ENCODE measurements at regions of chr3 and their contacts with region 1.

Region 1: GRCh38 chr3:18758047-18758704 is 333.0 kb upstream of the SATB1 start:
- DNase-seq: peak; percentile 73
- H3K4me3 Mint-ChIP-seq: no peak overlapping the region
- H3K27ac Mint-ChIP-seq: peak overlapping the region; percentile 26
- H3K4me1 Mint-ChIP-seq: peaks cover 50% of the 10 kb centered on the region
- H3K27me3 Mint-ChIP-seq: no peaks in the 10 kb centered on the region

Region 2: GRCh38 chr3:18080198-18080689 is 677.9 kb before region 1 on chr3:
- CTCF ChIA-PET with region 1: no interaction called
- POLR2A ChIA-PET with region 1: no interaction called
- DNase-seq: no peak
- H3K4me3 Mint-ChIP-seq: no peak overlapping the region
- H3K27ac Mint-ChIP-seq: no peak overlapping the region
- H3K4me1 Mint-ChIP-seq: no peaks in the 10 kb centered on the region
- H3K27me3 Mint-ChIP-seq: peaks cover 3% of the 10 kb centered on the region

Region 3: DNA sequence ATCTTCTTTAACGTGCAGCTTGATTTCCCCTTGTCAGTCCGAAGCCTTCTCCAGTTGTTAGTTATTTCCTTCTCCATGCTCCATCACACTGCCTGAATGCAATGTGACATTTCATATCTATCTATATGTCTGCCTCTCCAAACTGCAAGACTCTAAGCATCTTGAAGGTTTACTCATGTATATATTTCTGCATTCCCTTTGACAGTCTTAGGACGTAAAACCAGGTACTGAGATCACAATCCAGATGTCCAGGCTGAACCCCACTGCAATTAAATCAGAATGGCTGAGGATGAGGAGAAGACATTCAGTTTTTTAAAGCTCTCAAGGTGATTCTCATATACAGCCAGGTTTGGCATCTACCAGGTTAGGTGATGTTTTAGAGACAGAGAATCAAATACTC is 326.9 kb before region 1 on chr3:
- CTCF ChIA-PET with region 1: interaction called, 12 read pairs
- POLR2A ChIA-PET with region 1: no interaction called
- DNase-seq: no peak
- H3K4me3 Mint-ChIP-seq: peak overlapping the region; percentile 76
- H3K27ac Mint-ChIP-seq: peak overlapping the region; percentile 83
- H3K4me1 Mint-ChIP-seq: peaks cover 72% of the 10 kb centered on the region
- H3K27me3 Mint-ChIP-seq: no peaks in the 10 kb centered on the region

Region 4: DNA sequence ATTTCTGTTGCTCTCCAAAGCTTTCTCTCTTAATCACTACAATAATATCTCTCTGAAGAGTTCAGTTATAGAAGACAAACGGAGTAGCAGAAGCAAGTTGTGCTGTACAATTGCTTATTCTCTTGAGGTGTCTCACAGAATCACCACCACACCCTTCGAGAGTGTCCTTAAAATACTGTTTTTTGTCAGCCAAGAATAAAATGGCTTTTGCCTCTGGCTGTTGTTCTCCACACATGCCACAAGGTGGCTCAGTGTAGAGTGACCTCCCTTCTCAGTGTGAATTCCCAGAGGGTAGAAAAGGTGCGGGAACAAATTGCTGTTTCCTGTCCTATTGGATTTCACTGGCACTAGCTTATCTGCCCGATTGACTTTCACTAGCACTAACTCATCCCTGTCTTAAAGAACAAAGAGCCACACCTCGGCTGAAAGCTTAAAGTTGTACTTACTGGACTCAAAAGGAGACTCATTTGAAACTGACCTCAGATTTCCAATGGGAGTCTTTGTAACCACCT is 198.8 kb before region 1 on chr3:
- CTCF ChIA-PET with region 1: interaction called, 16 read pairs
- POLR2A ChIA-PET with region 1: no interaction called
- DNase-seq: peak; percentile 47
- H3K4me3 Mint-ChIP-seq: no peak overlapping the region
- H3K27ac Mint-ChIP-seq: peak overlapping the region; percentile 83
- H3K4me1 Mint-ChIP-seq: peaks cover 49% of the 10 kb centered on the region
- H3K27me3 Mint-ChIP-seq: no peaks in the 10 kb centered on the region

Region 5: DNA sequence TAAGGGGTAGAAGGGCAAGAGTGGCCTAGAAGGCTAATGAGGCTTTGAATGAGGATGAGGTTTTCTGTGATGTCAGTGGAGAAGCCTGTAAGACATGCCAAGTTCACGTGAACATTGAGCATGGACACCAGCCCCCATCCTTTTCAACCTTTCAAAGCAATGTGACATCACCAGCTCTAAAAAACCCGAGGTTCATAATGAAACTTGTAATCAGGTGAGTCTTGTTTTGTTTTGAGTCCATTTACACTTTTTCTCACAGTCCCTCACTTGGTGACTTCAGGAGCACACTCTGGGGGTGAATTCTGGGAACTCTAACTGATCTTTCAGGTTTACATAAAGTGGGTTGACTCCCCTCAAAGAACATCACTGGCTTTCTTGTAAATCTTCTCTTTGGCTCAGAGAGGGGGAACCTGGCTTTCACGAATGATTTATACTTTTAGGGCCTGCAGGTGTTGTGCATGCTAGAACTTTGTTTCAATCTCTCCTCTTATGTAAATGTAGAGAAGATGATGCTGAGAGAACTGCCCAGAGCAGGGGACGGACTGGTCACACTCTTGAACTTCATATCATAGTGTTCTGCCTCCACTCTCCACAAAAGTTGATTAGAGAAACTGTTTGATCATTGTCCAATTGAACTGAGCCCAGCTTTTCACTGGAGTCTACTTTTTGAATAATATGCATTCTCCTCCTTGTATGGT is 108.4 kb before region 1 on chr3:
- CTCF ChIA-PET with region 1: interaction called, 8 read pairs
- POLR2A ChIA-PET with region 1: interaction called, 10 read pairs
- DNase-seq: peak; percentile 70
- H3K4me3 Mint-ChIP-seq: peak overlapping the region; percentile 9
- H3K27ac Mint-ChIP-seq: peak overlapping the region; percentile 88
- H3K4me1 Mint-ChIP-seq: peaks cover 76% of the 10 kb centered on the region
- H3K27me3 Mint-ChIP-seq: no peaks in the 10 kb centered on the region

Region 6: GRCh38 chr3:18703798-18704197 is 54.4 kb before region 1 on chr3:
- CTCF ChIA-PET with region 1: interaction called, 10 read pairs
- POLR2A ChIA-PET with region 1: no interaction called
- DNase-seq: no peak
- H3K4me3 Mint-ChIP-seq: no peak overlapping the region
- H3K27ac Mint-ChIP-seq: no peak overlapping the region
- H3K4me1 Mint-ChIP-seq: peaks cover 13% of the 10 kb centered on the region
- H3K27me3 Mint-ChIP-seq: no peaks in the 10 kb centered on the region

Region 7: DNA sequence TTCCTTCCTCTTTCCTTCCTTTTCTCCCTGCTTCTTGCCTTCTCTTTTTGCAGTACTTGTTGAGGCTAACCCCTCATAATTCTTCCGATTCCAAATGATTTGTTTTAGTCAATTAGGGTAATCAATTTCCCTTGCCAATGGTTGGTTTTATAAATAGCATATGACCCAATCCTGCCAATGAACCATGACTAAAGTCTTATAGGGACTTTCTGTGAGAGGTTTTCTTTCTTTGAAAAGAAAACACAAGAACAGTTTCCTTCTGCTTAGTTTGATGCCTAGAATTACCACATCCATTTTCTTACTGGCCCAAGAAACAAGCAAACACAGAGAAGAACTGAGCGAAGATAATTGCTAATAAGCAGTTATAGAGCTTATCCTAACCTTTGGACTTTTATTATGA is 40.6 kb before region 1 on chr3:
- CTCF ChIA-PET with region 1: interaction called, 29 read pairs
- POLR2A ChIA-PET with region 1: no interaction called
- DNase-seq: no peak
- H3K4me3 Mint-ChIP-seq: peak overlapping the region; percentile 13
- H3K27ac Mint-ChIP-seq: peak overlapping the region; percentile 96
- H3K4me1 Mint-ChIP-seq: peaks cover 70% of the 10 kb centered on the region
- H3K27me3 Mint-ChIP-seq: no peaks in the 10 kb centered on the region

Region 8: GRCh38 chr3:18747383-18747782 is 10.8 kb before region 1 on chr3:
- CTCF ChIA-PET with region 1: interaction called, 40 read pairs
- POLR2A ChIA-PET with region 1: no interaction called
- DNase-seq: no peak
- H3K4me3 Mint-ChIP-seq: no peak overlapping the region
- H3K27ac Mint-ChIP-seq: no peak overlapping the region
- H3K4me1 Mint-ChIP-seq: peaks cover 82% of the 10 kb centered on the region
- H3K27me3 Mint-ChIP-seq: no peaks in the 10 kb centered on the region

Region 9: GRCh38 chr3:19074257-19074900 is 316.2 kb after region 1 on chr3:
- CTCF ChIA-PET with region 1: no interaction called
- POLR2A ChIA-PET with region 1: no interaction called
- DNase-seq: no peak
- H3K4me3 Mint-ChIP-seq: no peak overlapping the region
- H3K27ac Mint-ChIP-seq: no peak overlapping the region
- H3K4me1 Mint-ChIP-seq: no peaks in the 10 kb centered on the region
- H3K27me3 Mint-ChIP-seq: peaks cover 2% of the 10 kb centered on the region

Region 10: GRCh38 chr3:19342389-19342788 is 584.2 kb after region 1 on chr3:
- CTCF ChIA-PET with region 1: no interaction called
- POLR2A ChIA-PET with region 1: no interaction called
- DNase-seq: no peak
- H3K4me3 Mint-ChIP-seq: no peak overlapping the region
- H3K27ac Mint-ChIP-seq: no peak overlapping the region
- H3K4me1 Mint-ChIP-seq: peaks cover under 1% of the 10 kb centered on the region
- H3K27me3 Mint-ChIP-seq: peaks cover 5% of the 10 kb centered on the region

Measured in activated CD4-positive, alpha-beta T cell treated with anti-CD3 and anti-CD28 coated beads, Interleukin-2, amount 10 ng/mL, durations not matched to agents 7 days and 5 days (primary cell).